ENCODE measurements at regions of chr17 and their contacts with region 1.

Region 1: GRCh38 chr17:49997791-49998703 is 3.0 kb upstream of the DLX3 start:
- DNase-seq: peak; percentile 87
- CTCF ChIP-seq: peak; percentile 87

Region 2: DNA sequence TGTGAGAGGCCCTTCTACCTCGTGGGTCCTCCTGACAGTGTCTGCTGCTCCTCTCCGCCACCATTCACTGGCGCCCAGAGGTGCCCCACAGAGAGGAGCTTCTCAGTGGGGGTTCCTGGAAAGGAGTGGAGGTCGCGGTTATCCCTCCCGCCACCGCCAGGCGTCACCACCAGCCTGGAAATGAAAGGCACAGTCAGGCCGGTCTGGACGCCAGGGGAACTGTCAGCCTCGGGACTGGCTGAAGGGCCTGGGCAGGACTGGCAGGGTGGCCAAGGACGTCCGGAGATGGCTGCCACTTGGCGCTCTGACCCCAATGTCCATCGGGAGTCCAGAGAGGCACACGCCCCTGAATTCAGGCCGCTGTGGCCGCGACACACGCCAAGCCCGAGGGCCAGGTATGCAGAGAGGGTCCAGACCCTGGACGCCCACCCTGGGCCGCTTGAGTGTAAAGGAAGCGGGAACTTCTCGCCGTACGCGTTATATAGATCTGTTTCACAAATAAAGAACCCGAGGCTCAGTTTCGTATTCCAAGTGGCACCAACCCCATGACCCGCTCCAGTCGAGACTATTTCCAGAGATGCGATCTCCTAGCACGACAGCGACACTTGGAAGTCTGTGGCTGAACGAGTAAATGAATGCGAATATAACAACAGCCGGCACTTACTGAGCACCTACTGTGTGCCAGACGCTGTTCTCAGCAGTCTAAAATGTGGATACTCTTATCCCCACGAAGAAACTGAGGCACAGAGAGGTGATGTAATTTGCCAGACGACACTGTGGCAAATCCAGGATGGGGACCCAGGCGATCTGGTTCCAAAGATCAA is 430.0 kb before region 1 on chr17:
- in situ Hi-C with region 1: loop called (anchors 25 kb)
- DNase-seq: peak; percentile 81
- CTCF ChIP-seq: peak; percentile 99

Region 3: DNA sequence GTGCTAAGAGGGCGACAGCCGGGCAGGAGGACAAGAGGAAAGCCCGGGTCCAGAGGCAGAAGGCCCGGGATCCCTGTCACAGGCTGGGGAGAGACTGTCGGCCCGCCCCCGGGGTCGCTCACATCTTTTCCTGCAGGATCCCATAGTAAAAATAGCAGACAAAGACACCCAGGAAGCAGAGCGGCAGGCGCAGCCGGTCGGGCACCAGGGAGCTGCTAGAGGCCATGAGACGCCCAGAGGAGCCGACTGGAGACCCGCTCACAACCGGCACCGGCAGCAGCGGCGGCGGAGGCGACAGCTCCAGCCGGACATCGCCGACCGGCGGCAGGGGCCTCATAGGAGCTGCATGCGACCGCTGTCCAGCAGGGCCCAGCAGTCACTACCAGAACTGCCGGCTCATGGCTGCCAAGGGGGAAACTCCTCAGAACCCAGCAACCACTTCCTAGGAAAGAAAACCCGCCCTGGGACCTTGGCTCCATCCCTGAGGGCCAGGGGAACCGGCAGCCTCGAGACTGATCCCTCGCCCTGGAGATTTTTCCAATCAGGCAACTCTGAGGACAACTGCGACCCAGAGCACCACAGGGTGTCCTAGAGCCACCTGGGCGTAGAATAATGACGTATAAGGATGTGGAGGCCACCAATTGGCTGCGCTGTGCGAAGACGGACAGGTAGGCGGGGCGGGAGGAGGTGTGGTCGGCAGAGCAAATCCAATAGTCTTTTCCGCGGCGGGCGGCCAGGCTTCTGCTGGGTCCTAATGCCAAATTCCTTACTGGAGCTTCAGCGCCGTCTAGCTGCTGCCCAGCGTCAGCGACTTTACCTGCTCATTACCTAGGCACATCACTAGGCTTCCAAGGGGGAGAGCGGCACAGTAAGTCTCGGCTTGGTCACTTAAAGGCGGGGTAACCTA is 290.2 kb before region 1 on chr17 and contains the start of gene SLC35B1:
- in situ Hi-C with region 1: loop called (anchors 25 kb)
- DNase-seq: peak; percentile 98
- CTCF ChIP-seq: peak; percentile 99

Region 4: DNA sequence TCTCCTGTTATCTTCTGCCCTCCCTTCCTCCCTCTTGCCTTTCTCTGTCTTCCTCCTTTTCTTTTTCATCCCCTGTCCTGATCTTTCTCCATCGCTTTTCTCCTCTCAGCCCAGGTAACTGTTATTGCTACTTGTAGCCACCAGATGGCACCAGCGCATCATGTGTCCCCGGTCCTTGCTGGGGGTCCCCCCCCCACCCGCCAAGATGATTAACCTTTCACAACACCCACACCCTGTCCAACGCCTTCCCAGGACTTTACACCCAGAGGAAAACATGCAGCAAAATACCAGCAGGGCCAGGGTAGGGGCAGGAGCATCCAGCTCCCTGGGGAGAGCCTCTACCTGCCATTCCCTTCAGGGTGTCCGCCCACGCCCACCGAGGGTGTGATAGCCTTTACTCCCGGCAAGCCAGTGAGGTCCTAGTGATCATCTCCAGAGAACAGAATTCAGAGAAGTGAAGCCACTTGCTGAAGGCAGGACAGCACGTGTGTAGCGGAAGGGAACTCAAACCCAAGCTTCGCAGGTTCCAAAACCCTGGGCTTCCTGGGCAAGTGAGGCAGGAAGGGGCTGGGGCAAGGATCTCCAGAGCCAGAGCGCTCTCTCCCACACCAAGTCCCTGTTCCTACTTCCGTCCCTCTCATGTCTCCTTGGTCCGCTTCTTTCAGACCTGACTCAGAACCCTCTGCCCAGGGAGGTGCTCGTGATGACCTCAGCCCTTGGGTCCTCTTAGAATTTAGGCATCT is 136.7 kb before region 1 on chr17:
- in situ Hi-C with region 1: loop called (anchors 5 kb)
- DNase-seq: peak; percentile 84
- CTCF ChIP-seq: peak; percentile 82

Measured in GM13977 (cell line).